Activated CD4-positive, alpha-beta memory T cell treated with anti-CD3 and anti-CD28 coated beads for 36 hours (primary cell): ENCODE measurements at regions of chr7 and their contacts with region 1.

Region 1: DNA sequence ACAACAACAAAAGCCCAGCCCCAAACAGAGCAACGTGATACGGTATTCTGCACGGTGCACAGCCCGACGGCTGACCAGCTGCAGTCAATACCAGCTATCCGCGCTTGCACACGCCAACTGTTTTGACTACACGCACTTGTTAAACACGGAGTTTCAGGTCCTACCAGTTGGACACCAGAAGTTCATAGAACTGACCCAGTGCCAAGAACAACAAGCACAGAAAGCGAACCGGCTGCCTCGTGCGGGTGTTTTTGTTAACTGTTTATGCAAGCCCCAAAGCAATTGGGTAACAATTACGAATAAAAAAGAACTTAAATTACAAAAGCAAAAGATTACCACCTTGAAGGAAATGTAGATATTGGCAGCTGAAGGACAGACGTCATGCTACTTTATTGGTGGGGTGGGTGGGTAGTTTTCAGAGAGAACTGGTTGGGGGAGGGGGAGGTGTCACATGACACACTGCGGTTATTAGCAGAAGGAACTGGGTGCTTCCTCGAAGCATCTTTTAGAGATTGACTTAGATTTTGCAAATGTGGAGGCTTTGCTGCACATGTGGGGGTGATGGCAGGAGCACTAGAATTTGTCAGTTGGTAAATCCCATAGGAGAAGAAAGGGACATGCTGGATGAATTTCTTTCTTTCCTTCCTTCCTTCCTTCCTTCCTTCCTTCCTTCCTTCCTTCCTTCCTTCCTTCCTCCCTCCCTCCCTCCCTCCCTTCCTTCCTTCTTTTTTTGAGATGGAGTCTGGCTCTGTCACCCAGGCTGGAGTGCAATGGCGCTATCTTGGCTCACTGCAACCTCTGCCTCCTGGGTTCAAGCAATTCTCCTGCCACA is 110.7 kb upstream of the EFCAB10 start:
- DNase-seq: peak; percentile 78
- H3K4me3 Mint-ChIP-seq: peak overlapping the region; percentile 78
- H3K27ac Mint-ChIP-seq: peak overlapping the region; percentile 76
- H3K4me1 Mint-ChIP-seq: peaks cover 47% of the 10 kb centered on the region
- H3K27me3 Mint-ChIP-seq: no peaks in the 10 kb centered on the region

Region 2: DNA sequence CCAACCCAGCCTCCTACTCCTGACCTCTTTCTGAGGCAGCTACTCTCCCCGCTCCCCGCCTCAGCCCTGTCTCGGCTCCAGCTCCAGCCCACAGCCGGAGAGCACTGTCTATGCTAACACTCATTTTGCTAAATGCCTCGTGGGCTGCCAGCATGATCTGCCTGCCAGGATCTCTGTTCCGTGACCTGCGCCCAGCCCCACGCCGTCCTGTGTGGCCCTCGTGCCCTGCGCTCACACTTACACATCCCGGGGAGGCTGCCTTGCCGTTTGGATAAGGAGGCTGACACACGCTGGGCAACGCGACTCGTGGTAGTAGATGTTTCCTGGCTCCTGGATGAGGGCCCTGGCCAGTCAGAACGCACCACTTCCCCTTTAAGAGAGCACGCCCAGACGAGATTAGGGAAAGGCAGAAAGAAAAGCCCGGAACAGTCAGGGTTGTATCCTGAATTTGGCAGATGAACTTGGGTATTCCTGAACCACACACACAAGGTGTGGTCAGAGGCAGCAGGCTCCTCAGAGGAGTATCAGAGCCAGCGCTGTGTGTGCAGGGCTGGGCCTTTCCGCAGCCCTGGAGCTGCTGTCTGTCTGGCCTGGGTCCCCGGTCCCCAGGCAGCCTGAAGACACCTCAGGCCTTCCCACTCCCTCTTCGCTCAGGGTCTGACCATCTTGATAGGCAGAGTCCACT is 13.0 kb before region 1 on chr7:
- CTCF ChIA-PET with region 1: interaction called, 7 read pairs
- POLR2A ChIA-PET with region 1: interaction called, 6 read pairs
- intact Hi-C with region 1: loop called (anchors 1 kb)
- DNase-seq: peak; percentile 54
- H3K4me3 Mint-ChIP-seq: peak overlapping the region; percentile 78
- H3K27ac Mint-ChIP-seq: peak overlapping the region; percentile 95
- H3K4me1 Mint-ChIP-seq: peaks cover 75% of the 10 kb centered on the region
- H3K27me3 Mint-ChIP-seq: no peaks in the 10 kb centered on the region

Region 3: DNA sequence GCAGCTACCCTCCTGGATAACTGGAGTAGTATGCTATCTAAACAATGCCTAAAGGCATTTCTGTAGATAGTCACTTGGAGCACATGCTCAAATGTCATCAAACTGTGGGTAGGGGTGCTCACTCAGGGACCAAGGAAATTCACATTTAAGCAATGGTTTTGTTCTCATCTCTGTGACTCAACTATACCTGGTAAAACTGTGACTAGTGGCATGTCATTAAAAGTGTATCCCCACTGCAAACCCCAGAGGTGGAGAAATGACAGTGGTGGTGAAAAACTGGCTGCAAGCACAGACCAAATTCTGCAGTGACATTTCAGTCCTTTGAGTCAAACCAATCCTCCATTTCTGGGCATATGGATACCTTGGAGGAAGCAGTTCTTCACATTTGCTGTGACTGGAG is 23.6 kb after region 1 on chr7:
- CTCF ChIA-PET with region 1: no interaction called
- POLR2A ChIA-PET with region 1: no interaction called
- intact Hi-C with region 1: loop called (anchors 1 kb)
- DNase-seq: peak; percentile 43
- H3K4me3 Mint-ChIP-seq: no peak overlapping the region
- H3K27ac Mint-ChIP-seq: no peak overlapping the region
- H3K4me1 Mint-ChIP-seq: peaks cover 6% of the 10 kb centered on the region
- H3K27me3 Mint-ChIP-seq: no peaks in the 10 kb centered on the region